CD8-positive, alpha-beta memory T cell (primary cell): ENCODE measurements at regions of chr1 and their contacts with region 1.

Region 1: DNA sequence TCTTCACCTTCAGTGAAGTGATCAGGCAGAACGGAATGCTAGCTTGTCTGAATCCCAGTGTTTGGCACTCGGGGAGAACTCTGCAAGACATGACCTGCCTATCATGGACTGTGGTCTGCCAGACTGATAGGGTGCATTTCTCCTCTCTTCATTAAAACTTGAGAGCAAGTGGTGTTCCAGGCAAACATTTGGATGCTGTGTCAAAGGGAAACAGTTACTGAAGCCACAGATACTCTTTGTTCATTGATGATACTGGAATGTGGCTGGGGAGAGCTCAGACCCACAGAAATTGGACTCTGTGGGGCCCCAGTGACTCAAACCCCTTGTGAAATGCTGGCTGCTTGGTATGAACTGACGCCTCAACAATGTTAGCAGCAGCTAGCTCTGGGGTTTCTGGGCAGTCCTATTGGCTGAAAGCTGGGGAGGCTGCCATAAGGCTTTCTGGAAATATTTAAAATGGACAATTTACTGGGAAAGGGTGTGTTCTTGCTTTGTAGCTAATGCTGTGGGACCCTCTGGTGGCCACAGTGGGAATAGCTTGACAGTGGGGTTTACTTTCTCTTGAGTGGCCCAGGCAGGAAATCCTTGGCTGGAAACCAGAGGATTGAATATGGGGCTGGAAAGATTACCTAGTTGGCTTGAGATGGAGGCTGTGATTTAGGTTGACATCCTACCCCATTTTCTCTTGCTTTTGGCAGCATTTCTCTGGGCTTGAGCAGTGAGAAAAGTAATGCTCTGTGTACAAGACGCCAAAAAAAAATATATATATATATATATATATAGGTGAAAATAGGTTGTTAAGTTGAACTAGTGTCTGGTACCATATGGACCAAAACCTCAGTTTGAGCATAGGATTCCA is 8.0 kb upstream of the S100A10 start:
- DNase-seq: peak; percentile 61 to 82 (median 67)
- H3K4me3 ChIP-seq: no peak overlapping the region
- H3K4me3 Mint-ChIP-seq: no peak overlapping the region
- H3K27ac ChIP-seq: no peak overlapping the region
- H3K27ac Mint-ChIP-seq: peak overlapping the region in 1 of 8 donors; percentile 77
- H3K4me1 ChIP-seq: no peaks in the 10 kb centered on the region
- H3K4me1 Mint-ChIP-seq: peaks cover 0 to 5% (median 2%) of the 10 kb centered on the region in 3 donors
- H3K27me3 ChIP-seq: no peaks in the 10 kb centered on the region
- H3K27me3 Mint-ChIP-seq: peaks cover 6 to 11% of the 10 kb centered on the region in 2 donors

Region 2: GRCh38 chr1:151839457-151840405 is 161.9 kb before region 1 on chr1 and contains the start of gene C2CD4D:
- CTCF ChIA-PET with region 1: interaction called, 12 read pairs
- POLR2A ChIA-PET with region 1: no interaction called
- DNase-seq: peak; percentile 59 to 77 (median 69)
- H3K4me3 ChIP-seq: peak within 1 kb of the TSS; percentile 74
- H3K4me3 Mint-ChIP-seq: peak within 1 kb of the TSS; percentile 81 to 96 (median 87)
- H3K27ac ChIP-seq: peak within 1 kb of the TSS; percentile 67
- H3K27ac Mint-ChIP-seq: peak within 1 kb of the TSS; percentile 67 to 94 (median 91)
- H3K4me1 ChIP-seq: peaks cover 36% of the 10 kb centered on the region
- H3K4me1 Mint-ChIP-seq: peaks cover 45 to 60% (median 47%) of the 10 kb centered on the region in 3 donors
- H3K27me3 ChIP-seq: no peaks in the 10 kb centered on the region
- H3K27me3 Mint-ChIP-seq: peaks cover 0 to 1% of the 10 kb centered on the region in 2 donors
- total RNA-seq, gene C2CD4D: 1.9 to 2.0 TPM

Region 3: GRCh38 chr1:151934048-151934493 is 67.5 kb before region 1 on chr1:
- CTCF ChIA-PET with region 1: interaction called, 153 read pairs
- POLR2A ChIA-PET with region 1: no interaction called
- DNase-seq: peak in 4 of 5 donors; percentile 27 to 66 (median 57)
- H3K4me3 ChIP-seq: no peak overlapping the region
- H3K4me3 Mint-ChIP-seq: peak overlapping the region in 1 of 7 donors; percentile 23
- H3K27ac ChIP-seq: no peak overlapping the region
- H3K27ac Mint-ChIP-seq: peak overlapping the region in 2 of 8 donors; percentile 20 to 72
- H3K4me1 ChIP-seq: no peaks in the 10 kb centered on the region
- H3K4me1 Mint-ChIP-seq: peaks cover 2 to 6% (median 3%) of the 10 kb centered on the region in 3 donors
- H3K27me3 ChIP-seq: no peaks in the 10 kb centered on the region
- H3K27me3 Mint-ChIP-seq: peaks cover 4 to 5% of the 10 kb centered on the region in 2 donors

Region 4: DNA sequence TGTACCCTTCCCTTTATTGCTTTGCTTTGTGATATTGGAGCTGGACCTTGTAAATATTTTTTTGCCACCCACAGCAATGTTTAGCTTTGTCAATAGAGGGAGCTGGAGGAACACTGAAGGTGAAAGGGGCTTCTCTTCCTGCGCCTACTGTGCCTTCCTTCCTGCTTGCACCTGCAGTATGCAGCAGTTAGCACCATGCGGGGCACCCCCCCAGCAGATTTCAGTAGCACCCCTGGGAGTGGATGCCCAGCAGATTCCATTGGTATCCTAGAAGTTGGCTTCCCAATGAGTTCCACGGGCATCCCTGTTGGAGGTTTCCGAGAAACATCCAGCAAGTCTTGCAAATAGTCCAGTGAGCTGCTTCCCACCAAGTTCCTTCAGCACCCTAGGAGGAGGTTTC is 33.6 kb before region 1 on chr1:
- CTCF ChIA-PET with region 1: interaction called, 339 read pairs
- POLR2A ChIA-PET with region 1: interaction called, 4 read pairs
- DNase-seq: peak in 4 of 5 donors; percentile 30 to 74 (median 71)
- H3K4me3 ChIP-seq: no peak overlapping the region
- H3K4me3 Mint-ChIP-seq: no peak overlapping the region
- H3K27ac ChIP-seq: no peak overlapping the region
- H3K27ac Mint-ChIP-seq: no peak overlapping the region
- H3K4me1 ChIP-seq: peaks cover 5% of the 10 kb centered on the region
- H3K4me1 Mint-ChIP-seq: peaks cover 7 to 13% (median 11%) of the 10 kb centered on the region in 3 donors
- H3K27me3 ChIP-seq: no peaks in the 10 kb centered on the region
- H3K27me3 Mint-ChIP-seq: peaks cover 4% of the 10 kb centered on the region in 2 donors

Region 5: GRCh38 chr1:151984313-151984956 is 17.2 kb before region 1 on chr1:
- CTCF ChIA-PET with region 1: interaction called, 31 read pairs
- POLR2A ChIA-PET with region 1: no interaction called
- DNase-seq: peak in 4 of 5 donors; percentile 7 to 63 (median 28)
- H3K4me3 ChIP-seq: no peak overlapping the region
- H3K4me3 Mint-ChIP-seq: peak overlapping the region in 6 of 7 donors; percentile 3 to 66 (median 47)
- H3K27ac ChIP-seq: peak overlapping the region; percentile 6
- H3K27ac Mint-ChIP-seq: peak overlapping the region; percentile 40 to 91 (median 74)
- H3K4me1 ChIP-seq: peaks cover 40% of the 10 kb centered on the region
- H3K4me1 Mint-ChIP-seq: peaks cover 48 to 69% (median 60%) of the 10 kb centered on the region in 3 donors
- H3K27me3 ChIP-seq: no peaks in the 10 kb centered on the region
- H3K27me3 Mint-ChIP-seq: no peaks in the 10 kb centered on the region

Region 6: GRCh38 chr1:152034646-152035405 is 33.2 kb after region 1 on chr1:
- CTCF ChIA-PET with region 1: interaction called, 15 read pairs
- POLR2A ChIA-PET with region 1: interaction called, 4 read pairs
- DNase-seq: peak; percentile 32 to 74 (median 72)
- H3K4me3 ChIP-seq: peak overlapping the region; percentile 51
- H3K4me3 Mint-ChIP-seq: peak overlapping the region; percentile 93 to 99 (median 96)
- H3K27ac ChIP-seq: peak overlapping the region; percentile 79
- H3K27ac Mint-ChIP-seq: peak overlapping the region; percentile 94 to 100 (median 98)
- H3K4me1 ChIP-seq: peaks cover 40% of the 10 kb centered on the region
- H3K4me1 Mint-ChIP-seq: peaks cover 42 to 60% (median 44%) of the 10 kb centered on the region in 3 donors
- H3K27me3 ChIP-seq: no peaks in the 10 kb centered on the region
- H3K27me3 Mint-ChIP-seq: no peaks in the 10 kb centered on the region

Region 7: DNA sequence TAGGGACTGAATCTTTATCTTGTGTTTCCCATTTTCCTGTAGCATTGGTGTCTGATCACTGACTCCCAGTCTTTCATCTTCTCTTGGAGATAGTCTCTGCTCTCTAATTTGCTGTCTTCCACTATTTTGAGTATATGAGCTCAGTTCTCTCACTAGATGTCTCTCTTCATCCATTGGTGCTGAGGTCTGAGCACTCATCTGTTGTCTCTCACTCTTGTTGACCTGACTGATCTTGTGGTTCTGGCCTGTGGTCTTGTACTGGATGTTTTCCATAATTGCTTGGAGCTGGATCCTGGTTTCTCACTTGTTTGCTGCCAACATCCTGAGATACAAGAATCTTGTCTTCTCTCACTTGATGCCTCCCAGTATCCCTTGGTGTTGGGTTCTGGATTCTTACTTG is 60.3 kb after region 1 on chr1:
- CTCF ChIA-PET with region 1: no interaction called
- POLR2A ChIA-PET with region 1: no interaction called
- DNase-seq: no peak
- H3K4me3 ChIP-seq: no peak overlapping the region
- H3K4me3 Mint-ChIP-seq: no peak overlapping the region
- H3K27ac ChIP-seq: no peak overlapping the region
- H3K27ac Mint-ChIP-seq: no peak overlapping the region
- H3K4me1 ChIP-seq: no peaks in the 10 kb centered on the region
- H3K4me1 Mint-ChIP-seq: no peaks in the 10 kb centered on the region
- H3K27me3 ChIP-seq: peaks cover 10% of the 10 kb centered on the region
- H3K27me3 Mint-ChIP-seq: peaks cover 11 to 30% of the 10 kb centered on the region in 2 donors